ENCODE measurements at regions of chr19 and their contacts with region 1.

Region 1: DNA sequence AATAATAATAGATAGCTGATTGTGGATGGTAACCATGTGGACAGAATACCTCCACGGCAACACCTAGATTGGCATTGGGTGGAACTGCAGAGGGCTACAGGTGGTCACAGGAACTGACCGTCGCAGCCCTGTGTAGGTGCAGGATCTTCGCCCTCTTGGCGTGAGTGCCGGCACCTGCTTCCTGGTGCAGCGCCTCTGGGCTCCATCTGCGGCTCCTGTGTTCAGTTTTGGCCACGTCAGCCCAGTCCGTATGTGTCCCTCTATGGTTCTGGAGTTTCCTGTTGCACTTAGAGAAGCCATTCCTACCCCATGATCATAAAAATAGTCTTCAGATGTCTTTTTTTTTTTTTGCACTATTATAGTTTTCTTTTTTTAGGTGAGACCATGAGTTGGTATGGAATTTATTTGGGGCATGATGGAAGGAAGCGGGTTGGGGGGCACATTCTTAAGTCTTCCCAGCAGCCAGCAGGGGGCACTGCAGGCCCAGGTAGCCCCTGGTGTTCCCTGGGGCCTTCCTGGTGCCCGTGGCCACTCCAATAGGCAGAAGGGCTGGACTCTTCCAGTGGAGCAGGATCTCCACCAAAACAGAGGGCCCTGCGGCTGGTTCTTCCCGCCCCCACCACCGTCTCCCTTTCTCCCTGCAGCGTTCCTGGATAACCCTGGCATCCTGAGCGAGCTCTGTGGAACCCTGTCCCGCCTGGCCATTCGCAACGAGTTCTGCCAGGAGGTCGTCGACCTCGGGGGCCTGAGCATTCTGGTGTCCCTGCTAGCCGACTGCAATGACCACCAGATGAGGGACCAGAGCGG is 10.1 kb upstream of the SLC25A42 start:
- DNase-seq: peak; percentile 78 to 89
- ATAC-seq: peak; percentile 84 to 93 (median 87)
- H3K4me3 ChIP-seq: no peak overlapping the region
- H3K27ac ChIP-seq: no peak overlapping the region
- H3K4me1 ChIP-seq: no peaks in the 10 kb centered on the region
- H3K27me3 ChIP-seq: no peaks in the 10 kb centered on the region
- CTCF ChIP-seq: peak; percentile 81

Region 2: GRCh38 chr19:19115954-19116353 is 62.2 kb after region 1 on chr19:
- intact Hi-C with region 1: loop called in 1 of 2 experiments (anchors 1 kb)
- DNase-seq: peak; percentile 53 to 78
- ATAC-seq: peak; percentile 46 to 78 (median 55)
- H3K4me3 ChIP-seq: no peak overlapping the region
- H3K27ac ChIP-seq: no peak overlapping the region
- H3K4me1 ChIP-seq: no peaks in the 10 kb centered on the region
- H3K27me3 ChIP-seq: no peaks in the 10 kb centered on the region
- CTCF ChIP-seq: peak; percentile 47

Region 3: GRCh38 chr19:19138169-19138981 is 84.7 kb after region 1 on chr19 and contains the start of gene TMEM161A:
- intact Hi-C with region 1: loop called (anchors 1 to 2 kb)
- DNase-seq: peak; percentile 98
- ATAC-seq: peak; percentile 87 to 98 (median 92)
- H3K4me3 ChIP-seq: peak within 1 kb of the TSS; percentile 96
- H3K27ac ChIP-seq: peak within 1 kb of the TSS; percentile 96
- H3K4me1 ChIP-seq: peaks cover 6% of the 10 kb centered on the region
- H3K27me3 ChIP-seq: no peaks in the 10 kb centered on the region
- CTCF ChIP-seq: no peak
- total RNA-seq, gene TMEM161A: 31.3 to 61.3 (median 42.8) TPM

Region 4: DNA sequence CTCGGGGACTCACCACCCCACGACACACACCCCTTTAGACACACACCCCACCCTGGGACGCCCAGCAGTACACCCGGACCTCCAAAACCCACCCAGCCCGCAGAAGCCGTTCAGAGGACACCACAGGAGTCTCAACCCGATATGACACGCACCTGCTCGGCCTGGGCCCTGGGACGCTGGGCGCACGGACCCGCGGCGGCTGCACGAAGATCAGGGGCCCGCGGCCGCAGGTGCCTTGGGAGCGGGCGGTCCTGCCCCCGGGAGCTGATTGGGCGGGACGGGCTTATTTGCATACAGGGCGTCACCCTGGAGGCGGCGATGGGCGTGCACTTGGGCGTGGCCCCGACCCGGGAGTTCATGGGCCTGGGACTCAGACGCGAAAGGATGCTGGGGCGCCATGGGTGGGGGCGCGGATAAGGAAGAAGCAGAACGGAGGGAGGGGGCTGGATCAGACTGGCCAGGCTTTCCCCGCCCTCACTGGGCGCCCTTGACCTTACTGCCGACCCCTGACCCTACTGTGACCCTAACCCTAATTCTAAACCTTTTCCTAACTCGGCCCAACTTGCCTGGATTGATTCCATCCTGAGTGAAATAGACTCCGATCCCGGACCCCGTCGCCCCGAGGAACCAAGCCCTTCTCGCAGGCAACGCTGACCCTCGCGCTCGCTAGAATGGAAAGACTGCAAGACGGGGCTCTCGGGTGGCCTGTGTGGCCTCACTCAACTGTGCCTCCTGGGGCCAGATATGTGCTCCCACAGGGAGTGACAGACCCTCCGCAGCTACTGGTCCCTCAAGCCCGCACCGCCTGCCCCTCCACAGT is 116.6 kb after region 1 on chr19 and contains the start of gene MEF2B:
- intact Hi-C with region 1: loop called in 1 of 2 experiments (anchors 10 kb)
- DNase-seq: peak; percentile 82 to 89
- ATAC-seq: peak; percentile 89 to 93 (median 90)
- H3K4me3 ChIP-seq: peak within 1 kb of the TSS; percentile 60
- H3K27ac ChIP-seq: no peak within 1 kb of the TSS
- H3K4me1 ChIP-seq: peaks cover 19% of the 10 kb centered on the region
- H3K27me3 ChIP-seq: no peaks in the 10 kb centered on the region
- CTCF ChIP-seq: no peak
- total RNA-seq, gene MEF2B: 0.56 to 0.91 (median 0.63) TPM